Calu3 (cell line): ENCODE measurements at regions of chr3 and their contacts with region 1.

Region 1: GRCh38 chr3:172129870-172130683 is 90.7 kb downstream of the FNDC3B start:
- DNase-seq: peak; percentile 95
- H3K4me3 Mint-ChIP-seq: peak overlapping the region; percentile 61
- H3K27ac Mint-ChIP-seq: peak overlapping the region; percentile 100
- H3K4me1 Mint-ChIP-seq: peaks cover 88% of the 10 kb centered on the region
- H3K27me3 Mint-ChIP-seq: no peaks in the 10 kb centered on the region
- CTCF ChIP-seq: no peak

Region 2: DNA sequence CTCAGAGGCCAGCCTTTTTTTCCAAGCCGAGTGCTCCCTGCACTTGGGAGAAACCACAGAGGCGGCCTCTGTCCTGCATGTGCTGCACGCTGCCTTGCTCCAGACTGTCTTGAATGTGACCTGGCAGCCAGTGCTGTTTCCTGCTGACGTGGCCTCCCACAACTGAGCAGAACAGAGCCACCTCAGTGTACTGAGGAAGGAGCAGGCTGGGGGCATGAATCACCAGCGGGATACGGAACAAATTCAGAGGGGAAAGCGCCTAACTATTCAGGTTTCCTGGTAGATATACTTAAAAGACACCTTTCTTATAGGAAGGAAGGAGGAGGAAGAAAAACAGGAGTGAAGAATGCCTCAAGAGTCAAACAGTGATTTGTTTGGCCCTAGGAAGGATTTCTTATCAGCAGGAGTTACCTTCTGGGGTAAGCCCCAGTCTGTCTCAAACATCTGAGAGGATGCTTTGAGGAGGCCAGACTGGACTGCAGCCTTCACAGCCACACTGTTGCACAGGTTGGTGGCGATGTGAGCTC is 23.3 kb after region 1 on chr3:
- CTCF ChIA-PET with region 1: interaction called, 10 read pairs
- intact Hi-C with region 1: no loop called
- DNase-seq: peak; percentile 98
- H3K4me3 Mint-ChIP-seq: peak overlapping the region; percentile 56
- H3K27ac Mint-ChIP-seq: peak overlapping the region; percentile 99
- H3K4me1 Mint-ChIP-seq: peaks cover 84% of the 10 kb centered on the region
- H3K27me3 Mint-ChIP-seq: no peaks in the 10 kb centered on the region
- CTCF ChIP-seq: no peak

Region 3: DNA sequence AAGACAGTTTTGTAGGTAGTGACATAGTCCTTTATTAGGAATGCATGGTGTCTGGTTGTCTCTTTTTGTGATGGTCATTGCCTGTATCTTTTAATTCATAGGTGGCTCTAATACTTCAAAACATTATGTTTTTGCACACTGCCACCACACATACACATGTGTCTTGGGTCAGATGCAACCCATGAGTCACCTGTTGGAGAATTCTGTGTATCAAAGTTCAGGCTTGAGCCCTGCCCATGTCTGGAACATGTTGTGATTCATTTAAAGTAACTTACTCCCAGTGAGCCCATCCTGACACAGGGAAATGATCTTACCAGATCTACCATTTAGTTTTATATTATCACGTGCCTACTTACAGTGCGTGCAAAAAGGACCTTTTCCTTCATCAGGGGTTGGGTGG is 175.5 kb after region 1 on chr3:
- CTCF ChIA-PET with region 1: no interaction called
- intact Hi-C with region 1: no loop called
- DNase-seq: peak; percentile 66
- H3K4me3 Mint-ChIP-seq: peak overlapping the region; percentile 3
- H3K27ac Mint-ChIP-seq: peak overlapping the region; percentile 62
- H3K4me1 Mint-ChIP-seq: peaks cover 45% of the 10 kb centered on the region
- H3K27me3 Mint-ChIP-seq: no peaks in the 10 kb centered on the region
- CTCF ChIP-seq: no peak